ENCODE measurements at regions of chr10 and their contacts with region 1.

Region 1: GRCh38 chr10:4839401-4839800 is 13.4 kb downstream of the AKR1E2 start:
- DNase-seq: no peak
- H3K4me3 Mint-ChIP-seq: no peak overlapping the region
- H3K27ac Mint-ChIP-seq: no peak overlapping the region
- H3K4me1 Mint-ChIP-seq: peaks cover 25% of the 10 kb centered on the region
- H3K27me3 Mint-ChIP-seq: no peaks in the 10 kb centered on the region

Region 2: DNA sequence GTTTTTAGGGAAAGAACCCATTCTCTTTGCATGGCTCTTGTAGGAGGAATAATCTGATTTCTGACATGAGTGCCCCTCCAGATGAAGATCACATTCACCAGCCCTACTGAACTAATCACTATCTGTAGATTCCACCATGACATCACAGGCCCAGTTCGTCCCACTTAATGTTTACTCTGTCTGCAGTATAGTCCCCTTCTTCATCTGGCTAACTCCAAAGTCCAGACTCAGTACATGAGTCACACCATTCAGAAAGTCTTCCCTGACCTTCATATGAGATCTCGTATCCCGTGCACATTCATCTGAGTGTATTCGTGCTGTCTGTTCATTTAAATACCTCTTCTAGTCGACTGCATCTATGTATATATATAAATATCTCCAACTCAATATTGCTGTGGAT is 379.9 kb before region 1 on chr10:
- CTCF ChIA-PET with region 1: no interaction called
- POLR2A ChIA-PET with region 1: no interaction called
- DNase-seq: no peak
- H3K4me3 Mint-ChIP-seq: no peak overlapping the region
- H3K27ac Mint-ChIP-seq: no peak overlapping the region
- H3K4me1 Mint-ChIP-seq: no peaks in the 10 kb centered on the region
- H3K27me3 Mint-ChIP-seq: peaks cover 3% of the 10 kb centered on the region

Region 3: GRCh38 chr10:4825851-4826665 is 13.3 kb before region 1 on chr10 and contains the start of gene AKR1E2:
- CTCF ChIA-PET with region 1: interaction called, 5 read pairs
- POLR2A ChIA-PET with region 1: interaction called, 17 read pairs
- DNase-seq: peak; percentile 84
- H3K4me3 Mint-ChIP-seq: peak within 1 kb of the TSS; percentile 70
- H3K27ac Mint-ChIP-seq: peak within 1 kb of the TSS; percentile 43
- H3K4me1 Mint-ChIP-seq: peaks cover 15% of the 10 kb centered on the region
- H3K27me3 Mint-ChIP-seq: peaks cover 44% of the 10 kb centered on the region
- total RNA-seq, gene AKR1E2: 4.0 to 4.8 TPM

Region 4: GRCh38 chr10:4867520-4868356 is 28.3 kb after region 1 on chr10:
- CTCF ChIA-PET with region 1: no interaction called
- POLR2A ChIA-PET with region 1: no interaction called
- DNase-seq: no peak
- H3K4me3 Mint-ChIP-seq: no peak overlapping the region
- H3K27ac Mint-ChIP-seq: no peak overlapping the region
- H3K4me1 Mint-ChIP-seq: peaks cover 8% of the 10 kb centered on the region
- H3K27me3 Mint-ChIP-seq: peaks cover 1% of the 10 kb centered on the region

Region 5: DNA sequence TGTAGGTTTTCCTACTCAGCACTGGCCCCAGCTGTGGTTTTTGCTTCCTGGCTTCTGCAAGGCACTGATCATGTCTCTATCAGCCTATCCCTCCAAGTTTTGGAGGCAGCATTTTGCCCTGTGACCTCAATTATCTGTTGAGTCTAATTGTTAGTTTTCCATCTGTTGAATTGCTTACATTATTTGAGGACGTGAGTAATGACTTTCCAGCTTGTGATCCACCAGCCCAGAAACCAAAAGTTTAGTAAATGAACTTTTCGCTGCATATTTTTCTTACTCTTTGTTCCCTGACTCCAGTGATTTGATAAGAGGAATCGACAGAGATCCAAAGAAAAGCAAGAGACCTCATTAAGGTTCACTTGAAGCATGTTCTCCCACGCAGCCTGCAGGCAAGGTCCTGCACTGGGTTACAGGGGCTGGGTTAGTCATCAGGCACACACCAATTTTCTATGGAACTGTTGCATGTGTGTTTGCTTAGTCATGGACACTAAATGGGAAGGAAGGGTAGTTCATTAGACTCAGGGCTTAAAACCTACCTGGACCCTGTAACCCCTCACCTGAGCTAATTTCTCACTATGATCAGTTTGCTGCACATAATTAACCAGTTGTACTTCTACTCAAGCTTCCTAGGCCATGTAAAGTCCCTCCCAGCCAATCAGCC is 43.8 kb after region 1 on chr10:
- CTCF ChIA-PET with region 1: no interaction called
- POLR2A ChIA-PET with region 1: no interaction called
- DNase-seq: no peak
- H3K4me3 Mint-ChIP-seq: no peak overlapping the region
- H3K27ac Mint-ChIP-seq: no peak overlapping the region
- H3K4me1 Mint-ChIP-seq: peaks cover 3% of the 10 kb centered on the region
- H3K27me3 Mint-ChIP-seq: peaks cover 2% of the 10 kb centered on the region

Region 6: GRCh38 chr10:4909118-4909517 is 69.7 kb after region 1 on chr10:
- CTCF ChIA-PET with region 1: no interaction called
- POLR2A ChIA-PET with region 1: no interaction called
- DNase-seq: no peak
- H3K4me3 Mint-ChIP-seq: no peak overlapping the region
- H3K27ac Mint-ChIP-seq: no peak overlapping the region
- H3K4me1 Mint-ChIP-seq: no peaks in the 10 kb centered on the region
- H3K27me3 Mint-ChIP-seq: no peaks in the 10 kb centered on the region